Mammary epithelial cell (primary cell): ENCODE measurements at regions of chrX and their contacts with region 1.

Region 1: GRCh38 chrX:70084592-70085240 is 22.5 kb downstream of the OTUD6A start:
- DNase-seq: no peak
- H3K4me3 ChIP-seq: no peak overlapping the region
- H3K27ac ChIP-seq: no peak overlapping the region
- H3K4me1 ChIP-seq: no peaks in the 10 kb centered on the region
- H3K27me3 ChIP-seq: no peaks in the 10 kb centered on the region
- CTCF ChIP-seq: no peak

Region 2: GRCh38 chrX:69603566-69604194 is 481.0 kb before region 1 on chrX:
- CTCF ChIA-PET with region 1: no interaction called
- dilution Hi-C with region 1: no loop called
- in situ Hi-C with region 1: no loop called
- intact Hi-C with region 1: no loop called
- DNase-seq: no peak
- H3K4me3 ChIP-seq: no peak overlapping the region
- H3K27ac ChIP-seq: no peak overlapping the region
- H3K4me1 ChIP-seq: no peaks in the 10 kb centered on the region
- H3K27me3 ChIP-seq: no peaks in the 10 kb centered on the region
- CTCF ChIP-seq: no peak

Region 3: GRCh38 chrX:70257423-70258288 is 172.9 kb after region 1 on chrX:
- CTCF ChIA-PET with region 1: interaction called, 18 read pairs
- dilution Hi-C with region 1: no loop called
- in situ Hi-C with region 1: no loop called
- intact Hi-C with region 1: no loop called
- DNase-seq: no peak
- H3K4me3 ChIP-seq: no peak overlapping the region
- H3K27ac ChIP-seq: no peak overlapping the region
- H3K4me1 ChIP-seq: peaks cover 20% of the 10 kb centered on the region
- H3K27me3 ChIP-seq: no peaks in the 10 kb centered on the region
- CTCF ChIP-seq: no peak

Region 4: DNA sequence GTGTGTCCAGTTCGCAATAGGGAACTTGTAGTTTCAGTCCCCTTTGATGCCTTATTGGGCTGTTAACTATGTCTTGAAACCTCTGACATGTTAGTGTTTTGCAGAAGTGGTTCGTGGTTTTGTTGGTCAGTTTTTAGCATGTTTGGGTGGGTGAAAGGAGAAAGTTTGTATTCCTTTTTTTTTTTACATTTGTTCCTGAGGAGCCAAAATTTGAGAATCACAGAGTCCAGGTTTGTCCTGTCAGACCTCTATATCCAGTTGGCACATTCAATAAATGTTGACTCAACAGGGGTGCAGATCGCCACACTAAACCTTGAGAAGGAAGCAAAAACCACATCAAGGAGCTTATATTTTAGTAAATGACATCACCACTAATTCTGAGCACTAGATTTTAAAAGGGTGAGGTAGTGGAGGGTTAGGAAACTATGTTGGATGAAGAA is 386.2 kb after region 1 on chrX:
- CTCF ChIA-PET with region 1: no interaction called
- dilution Hi-C with region 1: no loop called
- in situ Hi-C with region 1: no loop called
- intact Hi-C with region 1: no loop called
- DNase-seq: peak; percentile 7
- H3K4me3 ChIP-seq: no peak overlapping the region
- H3K27ac ChIP-seq: no peak overlapping the region
- H3K4me1 ChIP-seq: no peaks in the 10 kb centered on the region
- H3K27me3 ChIP-seq: no peaks in the 10 kb centered on the region
- CTCF ChIP-seq: no peak